GM12878 (cell line): ENCODE measurements at regions of chr17 and their contacts with region 1.

Region 1: GRCh38 chr17:68613739-68614298 is 12.7 kb upstream of the FAM20A start:
- DNase-seq: no peak
- ATAC-seq: peak; percentile 79
- H3K4me3 ChIP-seq: no peak overlapping the region
- H3K27ac ChIP-seq: no peak overlapping the region
- H3K4me1 ChIP-seq: no peaks in the 10 kb centered on the region
- H3K27me3 ChIP-seq: no peaks in the 10 kb centered on the region
- CTCF ChIP-seq: peak; percentile 62 to 69 (median 67); a peak in 5 of 6 replicates
- EP300 ChIP-seq: no peak
- POLR2A ChIP-seq: no peak
- RAD21 ChIP-seq: peak; percentile 61

Region 2: DNA sequence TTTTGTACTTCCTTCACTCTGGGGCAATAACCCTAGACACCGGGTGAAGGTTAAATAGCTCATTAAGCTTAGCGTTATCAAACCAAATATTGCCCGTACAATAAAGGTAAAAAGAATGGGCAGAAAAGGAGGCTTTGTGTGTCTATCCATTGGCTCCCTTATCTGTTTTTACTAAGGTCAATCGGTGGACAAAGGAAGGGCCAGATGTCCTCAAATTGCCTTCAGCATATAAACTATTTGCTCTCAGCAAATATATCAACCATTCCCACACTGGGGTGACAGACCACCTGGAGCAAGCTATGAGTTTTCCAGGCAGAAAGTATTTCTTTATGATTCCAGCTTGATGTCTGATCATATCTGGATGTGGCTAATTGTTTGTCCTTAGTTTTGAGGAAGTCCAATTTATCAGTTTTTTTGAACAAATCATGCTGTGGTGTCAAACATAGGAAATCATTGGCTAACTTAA is 131.2 kb before region 1 on chr17:
- CTCF ChIA-PET with region 1: interaction called, 12 read pairs
- POLR2A ChIA-PET with region 1: no interaction called
- RAD21 ChIA-PET with region 1: no interaction called
- SMC1A ChIA-PET with region 1: interaction called, 3 read pairs
- in situ Hi-C with region 1: no loop called
- intact Hi-C with region 1: no loop called
- DNase-seq: no peak
- ATAC-seq: no peak
- H3K4me3 ChIP-seq: no peak overlapping the region
- H3K27ac ChIP-seq: no peak overlapping the region
- H3K4me1 ChIP-seq: peaks cover 2% of the 10 kb centered on the region
- H3K27me3 ChIP-seq: no peaks in the 10 kb centered on the region
- CTCF ChIP-seq: no peak
- EP300 ChIP-seq: no peak
- POLR2A ChIP-seq: no peak
- RAD21 ChIP-seq: no peak

Region 3: GRCh38 chr17:68533887-68534694 is 79.7 kb before region 1 on chr17:
- CTCF ChIA-PET with region 1: interaction called, 12 read pairs
- POLR2A ChIA-PET with region 1: no interaction called
- RAD21 ChIA-PET with region 1: no interaction called
- SMC1A ChIA-PET with region 1: no interaction called
- in situ Hi-C with region 1: no loop called
- intact Hi-C with region 1: no loop called
- DNase-seq: no peak
- ATAC-seq: no peak
- H3K4me3 ChIP-seq: no peak overlapping the region
- H3K27ac ChIP-seq: no peak overlapping the region
- H3K4me1 ChIP-seq: no peaks in the 10 kb centered on the region
- H3K27me3 ChIP-seq: no peaks in the 10 kb centered on the region
- CTCF ChIP-seq: peak in 2 of 3 experiments; percentile 20 to 23; a peak in 3 of 6 replicates
- EP300 ChIP-seq: no peak
- POLR2A ChIP-seq: no peak
- RAD21 ChIP-seq: no peak

Region 4: DNA sequence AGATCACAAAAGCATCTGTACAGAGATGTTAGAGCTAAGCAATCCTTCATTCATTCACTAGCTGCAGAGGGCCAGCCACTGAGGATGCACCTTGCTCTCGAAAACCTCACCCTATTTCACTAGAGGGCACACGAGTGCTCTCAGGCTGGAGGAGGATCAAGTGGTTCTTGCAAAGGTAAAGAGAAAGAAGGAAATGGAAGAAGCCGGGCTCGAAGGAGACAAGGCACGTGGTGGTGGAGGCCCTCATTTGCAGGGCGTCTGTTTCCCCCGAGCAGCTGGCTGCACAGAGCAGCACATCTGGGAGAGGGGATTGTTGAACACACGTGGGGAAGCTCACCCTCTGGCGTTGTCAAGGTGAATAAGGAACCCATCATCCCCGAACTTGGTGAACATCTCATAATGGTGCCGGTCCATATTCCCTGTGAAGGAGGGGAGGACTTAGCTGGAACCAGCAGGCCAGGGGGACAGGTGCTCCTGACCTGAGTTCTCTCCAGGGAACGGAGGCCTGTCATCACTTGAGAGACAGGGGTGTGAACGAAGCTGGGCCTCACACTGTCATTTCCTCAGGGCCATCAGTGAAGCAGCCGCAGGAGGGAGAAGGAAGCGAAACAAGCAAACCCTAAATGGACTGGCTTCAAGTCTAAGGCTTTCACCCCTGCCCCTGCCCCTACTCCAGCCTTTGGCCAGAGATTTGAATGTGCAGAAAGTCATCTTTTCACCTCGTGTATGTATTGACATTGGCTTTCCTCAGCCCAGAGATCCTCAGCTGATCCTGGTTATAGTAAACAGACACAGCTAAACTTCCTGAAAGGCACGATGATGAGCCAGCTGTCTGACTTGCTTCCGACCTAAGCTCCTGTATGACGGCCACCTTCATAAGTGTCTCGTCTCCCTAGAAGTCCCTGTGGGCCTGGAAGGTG is 74.0 kb before region 1 on chr17:
- CTCF ChIA-PET with region 1: interaction called, 12 read pairs
- POLR2A ChIA-PET with region 1: no interaction called
- RAD21 ChIA-PET with region 1: no interaction called
- SMC1A ChIA-PET with region 1: no interaction called
- in situ Hi-C with region 1: no loop called
- intact Hi-C with region 1: no loop called
- DNase-seq: no peak
- ATAC-seq: peak; percentile 53
- H3K4me3 ChIP-seq: no peak overlapping the region
- H3K27ac ChIP-seq: no peak overlapping the region
- H3K4me1 ChIP-seq: no peaks in the 10 kb centered on the region
- H3K27me3 ChIP-seq: no peaks in the 10 kb centered on the region
- CTCF ChIP-seq: peak in 2 of 3 experiments; percentile 6 to 29; a peak in 3 of 6 replicates
- EP300 ChIP-seq: no peak
- POLR2A ChIP-seq: peak; percentile 6; the same call in 1 of the 2 replicates
- RAD21 ChIP-seq: peak; percentile 33; the same call in 1 of the 2 replicates

Region 5: GRCh38 chr17:68595496-68595895 is 18.3 kb before region 1 on chr17:
- CTCF ChIA-PET with region 1: interaction called, 15 read pairs
- POLR2A ChIA-PET with region 1: interaction called, 6 read pairs
- RAD21 ChIA-PET with region 1: no interaction called
- SMC1A ChIA-PET with region 1: interaction called, 4 read pairs
- in situ Hi-C with region 1: no loop called
- intact Hi-C with region 1: no loop called
- DNase-seq: no peak
- ATAC-seq: no peak
- H3K4me3 ChIP-seq: no peak overlapping the region
- H3K27ac ChIP-seq: no peak overlapping the region
- H3K4me1 ChIP-seq: no peaks in the 10 kb centered on the region
- H3K27me3 ChIP-seq: peaks cover 4 to 13% of the 10 kb centered on the region in 2 experiments
- CTCF ChIP-seq: no peak
- EP300 ChIP-seq: no peak
- POLR2A ChIP-seq: no peak
- RAD21 ChIP-seq: no peak